Left ventricle myocardium superior (tissue), 1 donor: ENCODE measurements at regions of chr15 and their contacts with region 1.

Region 1: DNA sequence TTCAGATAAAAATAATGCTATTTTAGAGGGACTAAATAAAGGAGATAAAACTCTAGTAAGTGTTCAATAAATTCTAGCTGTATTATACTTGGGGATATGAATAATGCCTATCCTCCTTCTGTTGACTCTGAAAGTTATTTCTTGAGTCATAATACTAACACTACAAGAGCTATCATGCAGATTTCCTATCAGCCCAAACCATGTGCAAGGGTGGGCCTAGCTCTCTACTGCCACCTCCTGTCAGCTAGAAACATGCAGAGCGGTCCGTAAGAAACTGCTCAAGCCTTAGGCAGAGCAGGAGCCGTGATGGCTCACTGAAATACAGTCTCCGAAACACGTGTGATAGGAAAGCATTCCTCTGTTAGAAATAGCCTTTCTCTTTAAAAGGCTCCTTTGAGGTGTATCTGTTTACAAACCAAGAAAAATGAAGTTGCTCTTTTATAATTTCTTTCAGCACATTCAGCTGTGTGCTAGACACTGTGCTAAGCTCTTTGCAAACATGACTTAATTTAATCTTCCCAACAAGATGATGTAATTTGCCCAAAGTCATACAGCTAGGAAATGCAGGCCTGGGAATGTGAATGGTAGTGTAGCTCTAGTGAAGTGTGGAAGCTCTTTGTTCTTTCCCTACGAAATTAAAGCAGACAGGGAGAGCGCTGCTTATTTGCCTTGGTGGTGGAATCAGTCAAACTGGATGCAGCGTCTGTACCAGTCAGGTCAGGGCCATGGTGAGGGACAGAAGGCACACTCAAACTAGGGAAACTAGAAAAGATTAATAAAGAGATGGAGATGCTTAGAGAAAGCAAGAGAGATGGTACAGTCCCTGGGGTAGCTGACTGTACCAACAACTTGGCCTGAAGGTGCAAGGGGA is 43.1 kb downstream of the MTHFS start:
- DNase-seq: peak; percentile 36
- ATAC-seq: peak; percentile 91

Region 2: DNA sequence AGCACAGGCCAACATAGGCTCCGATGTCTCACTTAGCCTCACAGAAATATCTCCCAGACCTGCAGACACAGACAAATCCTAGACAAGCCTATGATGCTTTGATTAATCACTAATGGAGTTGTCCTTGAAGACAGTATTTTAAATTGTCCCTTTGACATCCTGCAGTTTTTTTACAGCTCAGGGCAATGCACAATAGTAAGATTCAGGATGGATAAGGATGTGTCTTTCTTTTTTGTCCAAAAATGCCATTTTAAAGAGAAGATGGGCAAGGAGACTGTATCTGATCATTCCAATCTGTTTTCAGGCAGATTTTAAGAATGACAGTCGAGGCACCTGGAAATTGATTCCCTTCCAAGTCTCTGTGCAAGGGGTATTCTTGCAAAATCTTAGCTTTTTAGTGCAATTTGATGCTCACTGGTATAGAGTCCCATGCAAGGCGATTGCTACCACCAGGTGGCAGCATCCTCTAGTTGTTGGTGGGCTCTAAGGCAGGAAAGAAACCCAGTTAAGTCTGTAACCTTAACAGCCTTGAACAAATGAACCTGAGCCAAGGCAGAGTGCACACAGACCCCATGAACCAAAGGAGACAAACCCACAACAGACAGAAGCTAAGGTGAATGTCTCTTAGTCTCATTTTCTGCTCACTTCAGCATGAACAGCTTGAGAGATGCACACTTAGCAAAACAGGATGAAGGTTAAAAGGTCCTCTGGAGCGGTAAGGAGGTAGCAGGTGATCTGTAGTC is 472.8 kb before region 1 on chr15:
- intact Hi-C with region 1: loop called (anchors 5 kb)
- DNase-seq: peak; percentile 85
- ATAC-seq: peak; percentile 84